Ascending aorta (tissue), 2 donors: ENCODE measurements at regions of chr2 and their contacts with region 1.

Region 1: GRCh38 chr2:197310271-197310985 is at the start of gene ANKRD44:
- DNase-seq: peak; percentile 74 to 95
- H3K4me3 ChIP-seq: peak within 1 kb of the TSS; percentile 77 to 89
- H3K27ac ChIP-seq: peak within 1 kb of the TSS; percentile 83 to 86
- H3K4me1 ChIP-seq: peaks cover 5 to 37% of the 10 kb centered on the region in 2 donors
- H3K27me3 ChIP-seq: no peaks in the 10 kb centered on the region
- CTCF ChIP-seq: peak in 2 of 3 experiments; percentile 34 to 76
- total RNA-seq, gene ANKRD44: 66.3 TPM

Region 2: DNA sequence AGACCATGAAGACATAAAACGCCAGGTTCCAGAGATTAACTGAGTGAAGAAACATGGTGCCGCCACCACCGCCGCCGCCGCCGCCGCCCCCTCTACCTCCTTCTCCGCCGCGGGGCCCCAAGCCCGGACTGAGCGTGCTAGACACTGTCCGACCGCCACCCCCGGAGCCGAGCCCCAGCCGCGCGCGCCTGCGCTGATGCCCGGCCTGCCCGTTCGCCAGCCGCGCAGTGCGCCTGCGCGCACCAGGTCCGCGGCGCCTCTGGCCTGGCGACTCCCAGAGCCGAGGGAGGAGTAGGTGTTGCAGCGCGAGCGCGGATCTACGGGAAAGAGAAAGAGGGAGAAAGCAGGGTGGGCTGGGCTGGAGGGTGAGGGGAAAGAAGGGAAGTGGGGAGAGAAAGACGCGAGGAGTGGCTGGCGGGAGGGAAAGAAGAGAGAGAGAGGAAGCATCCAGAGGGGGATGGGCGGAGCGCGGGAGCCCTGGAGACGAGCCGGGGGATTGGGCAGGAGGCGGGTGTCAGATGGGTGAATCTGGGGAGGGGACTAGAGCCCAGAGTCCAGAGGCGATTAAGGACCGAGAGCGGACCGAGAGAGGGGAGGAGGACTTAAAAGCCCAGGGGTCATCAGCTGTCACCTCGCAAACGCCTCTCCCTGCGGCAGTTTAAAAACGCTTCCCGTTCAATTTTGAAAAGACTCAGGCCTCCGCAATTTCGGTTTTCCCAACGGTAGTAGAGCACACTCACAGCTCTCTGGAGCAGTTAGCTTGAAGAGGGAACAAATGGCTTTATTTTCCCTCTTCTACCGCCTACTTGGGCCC is 383.7 kb before region 1 on chr2 and contains the start of gene PGAP1:
- intact Hi-C with region 1: loop called (anchors 2 kb)
- DNase-seq: peak; percentile 55 to 94
- H3K4me3 ChIP-seq: peak within 1 kb of the TSS; percentile 85
- H3K27ac ChIP-seq: peak within 1 kb of the TSS; percentile 84 to 89
- H3K4me1 ChIP-seq: peaks cover 0 to 4% of the 10 kb centered on the region in 2 donors
- H3K27me3 ChIP-seq: no peaks in the 10 kb centered on the region
- CTCF ChIP-seq: no peak
- total RNA-seq, gene PGAP1: 2.3 TPM

Region 3: GRCh38 chr2:197011799-197012641 is 298.4 kb before region 1 on chr2:
- intact Hi-C with region 1: loop called (anchors 2 kb)
- DNase-seq: no peak
- H3K4me3 ChIP-seq: no peak overlapping the region
- H3K27ac ChIP-seq: no peak overlapping the region
- H3K4me1 ChIP-seq: no peaks in the 10 kb centered on the region
- H3K27me3 ChIP-seq: no peaks in the 10 kb centered on the region
- CTCF ChIP-seq: peak; percentile 52 to 71 (median 55)

Region 4: DNA sequence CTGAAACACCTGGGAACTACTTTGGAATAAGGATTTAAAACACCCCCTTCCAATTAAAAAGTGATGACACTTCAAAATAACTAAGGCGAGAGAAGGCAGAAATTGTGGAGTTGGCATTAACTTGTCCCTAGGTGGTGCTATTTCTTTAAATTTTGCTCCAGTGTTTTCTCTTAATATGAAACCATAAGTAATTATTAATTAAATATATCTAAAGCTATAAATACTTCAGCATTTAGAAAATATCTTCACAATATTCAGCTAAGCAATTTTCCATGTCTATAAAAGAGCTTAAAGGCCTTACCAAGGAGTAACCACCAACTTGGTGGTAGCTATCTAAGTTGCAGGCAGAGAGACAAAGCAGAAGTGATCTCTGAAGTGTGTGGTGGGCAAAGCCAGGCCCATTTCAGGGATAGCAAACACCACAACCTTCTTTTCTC is 197.1 kb before region 1 on chr2:
- intact Hi-C with region 1: loop called (anchors 1 kb)
- DNase-seq: no peak
- H3K4me3 ChIP-seq: no peak overlapping the region
- H3K27ac ChIP-seq: no peak overlapping the region
- H3K4me1 ChIP-seq: peaks cover 0 to 5% of the 10 kb centered on the region in 2 donors
- H3K27me3 ChIP-seq: no peaks in the 10 kb centered on the region
- CTCF ChIP-seq: peak; percentile 37 to 70 (median 46)

Region 5: DNA sequence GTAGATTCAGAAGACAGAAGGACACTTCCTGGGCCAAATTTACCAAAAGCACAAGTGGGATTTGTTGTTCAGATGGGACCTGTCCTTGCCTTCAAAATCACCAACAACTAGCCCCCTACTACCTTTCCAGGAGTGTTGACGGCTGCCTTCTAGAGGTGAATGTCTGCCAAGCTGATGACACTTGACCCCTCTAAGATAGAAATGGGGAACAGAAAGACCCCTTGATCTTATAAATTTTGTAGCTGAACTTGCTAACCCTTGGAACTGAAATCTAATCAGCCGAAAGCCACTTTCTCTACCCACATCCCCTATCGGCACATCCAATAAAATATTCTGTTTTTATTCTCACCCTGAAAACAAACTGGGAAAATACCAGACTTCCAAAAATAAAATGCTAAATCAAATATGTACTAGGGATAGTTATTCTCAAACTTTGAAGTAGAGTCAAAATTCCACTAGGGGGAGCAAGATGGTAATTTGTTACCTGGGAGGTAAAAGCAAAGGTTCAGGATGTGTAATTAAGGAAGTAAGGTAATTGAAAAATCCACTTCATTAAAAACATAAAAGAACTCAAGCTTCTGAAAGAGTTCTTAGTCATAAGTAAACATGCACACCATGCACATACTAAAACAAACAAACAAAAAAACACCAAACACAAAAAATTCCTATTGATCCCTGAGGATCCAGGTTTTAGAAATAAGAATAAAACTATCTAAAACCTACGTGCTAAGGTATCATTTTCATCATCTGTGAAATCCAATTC is 119.1 kb before region 1 on chr2:
- intact Hi-C with region 1: loop called (anchors 1 kb)
- DNase-seq: no peak
- H3K4me3 ChIP-seq: no peak overlapping the region
- H3K27ac ChIP-seq: no peak overlapping the region
- H3K4me1 ChIP-seq: peaks cover 0 to 15% of the 10 kb centered on the region in 2 donors
- H3K27me3 ChIP-seq: no peaks in the 10 kb centered on the region
- CTCF ChIP-seq: peak; percentile 46 to 71 (median 52)

Region 6: DNA sequence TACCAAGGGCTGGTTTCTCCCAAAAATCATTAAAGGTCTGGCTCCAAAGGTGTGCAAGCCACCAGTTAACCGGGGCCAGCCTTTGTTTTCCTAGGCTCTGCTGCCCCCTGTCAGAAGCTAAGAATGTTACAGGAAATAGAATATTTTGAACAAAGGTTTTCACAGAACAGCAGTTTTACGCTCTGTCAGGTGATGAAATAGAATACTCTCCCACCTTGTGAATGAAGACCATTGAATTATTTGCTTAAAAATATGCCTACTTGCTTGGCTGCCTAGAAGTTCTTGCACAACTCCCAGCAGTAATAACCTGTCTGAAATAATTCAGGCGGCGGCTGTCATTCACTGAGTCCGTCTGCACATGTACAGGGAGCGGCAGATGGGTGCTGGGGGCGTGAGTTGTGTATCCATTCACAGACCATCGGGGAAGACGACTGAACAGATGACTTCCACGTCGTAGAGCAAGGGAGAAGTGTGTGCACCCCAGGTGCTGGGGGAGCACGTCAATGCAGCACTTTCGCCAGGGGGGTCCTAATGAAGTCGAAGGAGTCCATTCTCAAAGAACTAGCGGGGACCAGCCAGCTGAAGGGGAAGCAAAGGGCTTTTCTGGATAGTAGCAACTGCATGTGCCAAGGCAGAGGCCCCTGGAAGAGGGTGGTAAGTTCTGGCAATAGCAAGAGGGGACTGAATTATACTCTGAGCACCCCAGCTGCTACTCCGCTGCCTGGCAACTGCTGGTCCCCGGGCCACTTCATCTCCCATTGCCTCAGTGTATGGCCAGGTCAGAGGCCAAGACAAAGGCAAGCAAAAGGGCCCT is 68.3 kb after region 1 on chr2:
- intact Hi-C with region 1: loop called (anchors 5 kb)
- DNase-seq: no peak
- H3K4me3 ChIP-seq: peak overlapping the region; percentile 43 to 54
- H3K27ac ChIP-seq: peak overlapping the region; percentile 50 to 51
- H3K4me1 ChIP-seq: no peaks in the 10 kb centered on the region
- H3K27me3 ChIP-seq: no peaks in the 10 kb centered on the region
- CTCF ChIP-seq: peak; percentile 69 to 79 (median 71)